Left cardiac atrium (tissue), 4 donors: ENCODE measurements at regions of chr18 and their contacts with region 1.

Region 1: DNA sequence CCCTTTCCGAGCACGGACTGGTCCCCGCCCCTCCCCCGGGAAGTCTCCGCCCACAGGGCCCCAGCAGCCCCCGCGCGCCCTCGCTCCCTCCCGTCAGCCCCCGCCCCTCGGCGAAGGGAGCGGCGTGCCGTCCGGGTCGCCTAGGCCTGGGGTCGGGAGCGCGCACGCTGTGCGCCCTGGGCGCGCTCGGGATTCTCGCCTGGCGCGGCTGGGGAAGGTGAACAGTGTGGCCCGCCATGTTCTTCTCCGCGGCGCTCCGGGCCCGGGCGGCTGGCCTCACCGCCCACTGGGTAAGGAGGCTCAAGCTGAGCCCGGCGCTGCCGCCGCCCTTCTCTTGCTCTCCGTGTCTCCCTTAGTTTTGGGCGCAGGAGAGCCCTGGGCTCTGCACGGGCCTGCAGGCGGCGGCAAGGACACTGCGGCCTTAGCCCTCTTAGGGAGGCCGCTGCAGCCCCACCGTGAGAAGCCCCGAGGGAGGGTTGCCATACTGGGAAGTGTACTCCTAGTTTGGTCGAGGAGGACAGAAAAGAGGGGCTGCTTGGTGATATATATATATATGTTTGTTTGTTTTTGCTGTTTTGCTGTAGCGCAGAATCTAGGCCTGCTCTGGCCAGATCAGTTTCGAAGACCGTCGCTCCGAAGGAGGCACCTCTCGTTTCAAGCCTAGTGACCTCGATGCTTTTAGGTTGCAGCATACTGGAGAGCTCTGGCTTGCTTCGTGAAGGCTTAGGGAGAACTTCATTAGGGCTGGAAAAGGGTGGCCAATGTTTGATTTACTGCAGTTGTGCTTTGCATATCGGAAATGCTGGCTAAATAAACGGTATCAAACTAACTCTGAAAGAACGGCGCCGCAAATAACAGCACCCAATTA is at the start of gene NDUFV2:
- DNase-seq: peak; percentile 98
- ATAC-seq: peak; percentile 98 to 99
- total RNA-seq, gene NDUFV2: 285 to 318 TPM

Region 2: GRCh38 chr18:9136315-9137155 is 33.8 kb after region 1 on chr18 and contains the start of gene ANKRD12:
- intact Hi-C with region 1: loop called (anchors 5 kb)
- DNase-seq: peak; percentile 97
- ATAC-seq: peak; percentile 97 to 98
- total RNA-seq, gene ANKRD12: 45.6 to 51.5 TPM